Right ventricle myocardium inferior (tissue), 1 donor: ENCODE measurements at regions of chr1 and their contacts with region 1.

Region 1: GRCh38 chr1:153832293-153832692 is 57.1 kb downstream of the SLC27A3 start:
- DNase-seq: no peak
- ATAC-seq: no peak

Region 2: GRCh38 chr1:153880962-153881361 is 48.7 kb after region 1 on chr1:
- intact Hi-C with region 1: loop called (anchors 10 kb)
- DNase-seq: peak; percentile 92
- ATAC-seq: peak; percentile 90

Region 3: DNA sequence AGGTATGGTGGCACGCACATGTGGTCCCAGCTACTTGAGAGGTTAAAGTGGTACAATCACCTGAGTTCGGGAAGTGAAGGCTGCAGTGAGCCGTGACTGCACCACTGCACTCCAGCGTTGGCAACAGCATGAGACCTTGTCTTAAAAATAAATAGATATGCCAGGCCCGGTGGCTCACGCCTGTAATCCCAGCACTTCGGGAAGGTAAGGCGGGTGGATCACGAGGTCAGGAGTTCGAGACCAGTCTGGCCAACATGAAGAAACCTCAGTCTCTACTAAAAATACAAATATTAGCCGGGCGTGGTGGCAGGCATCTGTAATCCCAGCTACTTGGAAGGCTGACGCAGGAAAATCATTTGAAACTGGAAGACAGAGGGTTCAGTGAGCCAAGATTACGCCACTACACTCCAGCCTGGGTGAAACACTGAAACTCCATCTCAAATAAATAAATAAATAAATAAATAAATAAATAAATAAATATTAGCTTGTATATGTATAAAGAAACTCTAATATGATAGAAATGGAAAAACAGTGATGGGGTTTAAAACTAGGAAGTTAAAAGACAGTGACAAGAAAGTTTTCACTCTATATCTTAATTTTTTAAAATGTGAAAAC is 71.7 kb after region 1 on chr1:
- intact Hi-C with region 1: no loop called
- DNase-seq: no peak
- ATAC-seq: no peak